ENCODE measurements at regions of chr3 and their contacts with region 1.

Region 1: DNA sequence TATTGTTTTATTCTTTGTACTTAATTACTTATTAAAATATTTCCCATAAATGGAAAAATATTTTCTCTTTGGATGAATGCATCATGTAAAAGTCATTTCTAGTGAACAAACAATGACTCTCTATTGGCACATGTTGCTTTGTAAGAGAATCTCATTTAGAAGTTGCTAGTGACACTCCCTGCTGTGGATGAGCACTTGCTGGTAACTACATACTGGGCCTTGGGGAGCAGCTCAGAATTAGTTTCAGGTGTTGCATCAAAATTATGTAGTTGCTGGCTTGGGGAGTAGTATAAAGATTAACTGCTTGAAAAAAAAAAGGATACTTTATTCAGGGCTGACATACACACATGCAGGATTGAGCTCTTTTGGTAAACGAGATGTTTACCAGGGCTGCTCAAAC is 80.3 kb upstream of the KCNAB1 start:
- DNase-seq: no peak
- ATAC-seq: no peak
- H3K4me3 ChIP-seq: no peak overlapping the region
- H3K27ac ChIP-seq: no peak overlapping the region
- H3K4me1 ChIP-seq: peaks cover 0 to 1% of the 10 kb centered on the region in 2 donors
- H3K27me3 ChIP-seq: no peaks in the 10 kb centered on the region

Region 2: DNA sequence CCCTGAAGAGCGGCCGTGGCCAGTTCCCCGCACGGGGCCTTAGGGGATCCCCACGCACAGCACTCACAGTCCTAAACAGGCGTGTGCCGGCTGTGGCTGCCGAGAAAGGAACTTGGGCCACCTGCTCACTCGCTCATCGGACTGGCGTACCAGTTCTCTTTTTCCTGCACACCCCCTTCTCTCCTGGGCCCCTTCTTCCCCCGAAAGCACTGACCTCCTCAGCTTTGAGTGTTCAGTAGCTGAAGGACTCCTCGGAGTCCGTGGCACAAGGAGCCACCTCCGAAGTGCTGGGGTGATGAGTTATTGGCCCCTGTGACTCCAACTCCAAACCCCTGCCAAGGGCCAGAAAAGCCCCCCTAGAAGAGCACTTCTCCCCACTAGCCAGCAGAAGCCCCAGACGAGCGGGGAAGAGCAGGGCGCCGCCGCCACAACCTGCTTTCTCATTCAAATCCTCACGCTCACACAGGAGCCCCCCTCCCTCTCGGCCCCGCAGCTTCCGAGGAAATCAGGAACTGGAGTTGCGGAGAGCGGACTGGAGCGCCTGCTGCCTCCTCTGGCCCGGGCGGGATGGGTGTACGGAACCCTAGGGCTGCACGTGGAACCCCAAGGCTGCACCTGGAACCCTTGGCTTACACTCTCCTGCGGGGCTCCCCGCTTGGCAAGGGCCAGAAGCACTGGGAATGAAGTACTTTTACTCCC is 295.3 kb before region 1 on chr3 and contains the start of gene PLCH1:
- intact Hi-C with region 1: no loop called
- DNase-seq: peak; percentile 78 to 89
- ATAC-seq: peak; percentile 87
- H3K4me3 ChIP-seq: peak within 1 kb of the TSS; percentile 54 to 69
- H3K27ac ChIP-seq: no peak within 1 kb of the TSS
- H3K4me1 ChIP-seq: no peaks in the 10 kb centered on the region
- H3K27me3 ChIP-seq: no peaks in the 10 kb centered on the region
- total RNA-seq, gene PLCH1: 0.57 TPM in 1 of 2 donors, not detected in the other

Region 3: GRCh38 chr3:156017352-156018030 is 22.6 kb before region 1 on chr3:
- intact Hi-C with region 1: no loop called
- DNase-seq: no peak
- ATAC-seq: no peak
- H3K4me3 ChIP-seq: no peak overlapping the region
- H3K27ac ChIP-seq: no peak overlapping the region
- H3K4me1 ChIP-seq: no peaks in the 10 kb centered on the region
- H3K27me3 ChIP-seq: no peaks in the 10 kb centered on the region

Region 4: GRCh38 chr3:156535162-156535627 is 495.2 kb after region 1 on chr3:
- intact Hi-C with region 1: loop called in 1 of 2 experiments (anchors 10 kb)
- DNase-seq: peak; percentile 82 to 83
- ATAC-seq: peak; percentile 94
- H3K4me3 ChIP-seq: no peak overlapping the region
- H3K27ac ChIP-seq: no peak overlapping the region
- H3K4me1 ChIP-seq: no peaks in the 10 kb centered on the region
- H3K27me3 ChIP-seq: no peaks in the 10 kb centered on the region

Region 5: DNA sequence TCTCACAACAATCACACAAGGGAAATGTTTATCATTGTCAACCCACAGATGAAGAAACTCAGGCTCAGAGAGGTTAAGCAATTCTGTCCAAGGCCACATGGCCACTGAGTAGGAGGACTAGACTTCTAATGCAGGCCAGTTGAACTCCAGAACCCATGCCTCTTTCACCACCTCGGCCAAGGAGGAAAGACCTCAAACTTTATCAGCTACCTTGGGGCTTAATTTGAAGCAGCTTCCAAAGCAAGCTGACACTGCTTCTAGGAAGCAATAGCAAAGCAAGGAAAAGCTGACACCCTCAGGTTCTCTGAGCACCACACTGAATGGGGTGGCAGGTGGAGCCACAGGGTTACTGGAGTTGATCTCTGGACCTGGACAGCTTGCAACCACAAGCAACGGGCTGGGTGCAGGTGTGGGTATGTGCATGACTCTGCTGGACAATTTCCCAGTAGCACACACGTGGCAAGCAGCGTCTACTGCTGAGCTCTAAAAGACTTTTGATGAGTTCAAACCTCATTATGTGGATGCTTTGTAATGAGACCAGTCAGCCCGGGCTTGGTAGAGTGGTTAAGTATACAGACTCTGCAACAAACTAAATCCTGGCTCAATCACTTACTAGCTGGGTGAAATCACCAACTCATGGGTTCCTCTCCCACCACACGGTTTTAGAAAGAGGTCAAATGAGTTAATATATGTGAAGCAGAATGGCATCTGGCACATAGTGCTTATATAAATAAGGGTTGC is 1096.8 kb after region 1 on chr3:
- intact Hi-C with region 1: loop called in 1 of 2 experiments (anchors 5 kb)
- DNase-seq: no peak
- ATAC-seq: peak; percentile 21
- H3K4me3 ChIP-seq: no peak overlapping the region
- H3K27ac ChIP-seq: peak overlapping the region in 1 of 2 donors; percentile 67
- H3K4me1 ChIP-seq: peaks cover 4 to 8% of the 10 kb centered on the region in 2 donors
- H3K27me3 ChIP-seq: no peaks in the 10 kb centered on the region